PC-3 (cell line): ENCODE measurements at regions of chr18 and their contacts with region 1.

Region 1: DNA sequence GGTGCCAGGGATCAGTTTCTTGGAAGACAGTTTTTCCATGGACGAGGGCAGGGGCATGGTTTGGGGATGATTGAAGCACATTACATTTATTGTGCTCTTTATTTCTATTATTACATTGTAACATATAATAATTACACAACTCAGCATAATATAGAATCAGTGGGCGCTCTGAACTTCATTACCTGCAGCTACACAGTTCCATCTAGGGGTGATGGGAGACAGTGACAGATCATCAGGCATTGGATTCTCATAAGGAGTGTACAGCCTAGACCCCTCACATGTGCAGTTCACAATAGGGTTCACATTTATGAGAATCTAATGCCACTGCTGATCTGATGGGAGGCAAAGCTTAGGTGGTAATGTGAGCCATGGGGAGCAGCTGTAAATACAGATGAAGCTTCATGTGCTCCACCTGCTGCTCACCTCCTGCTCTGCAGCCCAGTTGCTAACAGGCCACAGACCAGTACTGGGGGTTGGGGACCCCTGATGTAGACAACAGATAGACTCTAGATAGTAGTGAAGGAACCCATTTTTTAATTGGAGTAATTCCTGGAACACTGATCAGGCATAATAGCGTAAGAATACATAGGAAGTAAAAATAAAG is 41.5 kb upstream of the MC4R start:
- DNase-seq: peak; percentile 53
- ATAC-seq: peak; percentile 89
- H3K4me3 ChIP-seq: no peak overlapping the region
- H3K27ac ChIP-seq: no peak overlapping the region
- H3K4me1 ChIP-seq: no peaks in the 10 kb centered on the region
- H3K27me3 ChIP-seq: no peaks in the 10 kb centered on the region
- CTCF ChIP-seq: peak; percentile 85

Region 2: GRCh38 chr18:60069145-60069544 is 344.9 kb before region 1 on chr18:
- CTCF ChIA-PET with region 1: no interaction called
- POLR2A ChIA-PET with region 1: no interaction called
- intact Hi-C with region 1: loop called (anchors 5 kb)
- DNase-seq: peak; percentile 20
- ATAC-seq: no peak
- H3K4me3 ChIP-seq: no peak overlapping the region
- H3K27ac ChIP-seq: no peak overlapping the region
- H3K4me1 ChIP-seq: peaks cover 22% of the 10 kb centered on the region
- H3K27me3 ChIP-seq: no peaks in the 10 kb centered on the region
- CTCF ChIP-seq: peak; percentile 55

Region 3: GRCh38 chr18:60189856-60190255 is 224.2 kb before region 1 on chr18:
- CTCF ChIA-PET with region 1: no interaction called
- POLR2A ChIA-PET with region 1: no interaction called
- intact Hi-C with region 1: loop called (anchors 10 kb)
- DNase-seq: no peak
- ATAC-seq: no peak
- H3K4me3 ChIP-seq: no peak overlapping the region
- H3K27ac ChIP-seq: no peak overlapping the region
- H3K4me1 ChIP-seq: no peaks in the 10 kb centered on the region
- H3K27me3 ChIP-seq: no peaks in the 10 kb centered on the region
- CTCF ChIP-seq: no peak